WTC11 (cell line): ENCODE measurements at regions of chr13 and their contacts with region 1.

Region 1: DNA sequence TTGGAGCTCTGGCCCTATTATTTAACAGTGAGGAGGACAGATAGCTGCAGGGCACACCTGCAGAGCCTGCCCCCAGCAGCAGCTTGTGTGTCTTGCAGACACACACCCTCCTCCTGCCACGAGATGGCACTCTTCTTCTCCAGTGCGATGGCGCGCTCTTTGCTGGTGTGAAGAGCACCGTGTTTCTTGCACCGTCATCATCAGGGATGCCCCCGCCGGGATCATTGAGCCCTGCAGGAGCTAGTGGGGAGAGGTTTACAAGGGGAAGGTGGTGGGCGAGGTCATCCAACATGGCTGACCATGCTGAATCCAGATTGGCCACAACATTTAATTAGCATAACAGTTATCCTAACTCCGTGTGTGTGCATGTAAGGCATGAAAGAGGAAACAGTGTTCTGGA is 105.6 kb downstream of the RAB20 start:
- DNase-seq: peak; percentile 84
- ATAC-seq: peak; percentile 93
- H3K4me3 Mint-ChIP-seq: no peak overlapping the region
- H3K27ac Mint-ChIP-seq: peak overlapping the region; percentile 19; the same call in 1 of the 2 replicates
- H3K4me1 Mint-ChIP-seq: peaks cover 28% of the 10 kb centered on the region
- H3K27me3 Mint-ChIP-seq: no peaks in the 10 kb centered on the region
- CTCF ChIP-seq: peak; percentile 47; the same call in 1 of the 2 replicates

Region 2: GRCh38 chr13:110444226-110444653 is 11.7 kb before region 1 on chr13:
- CTCF ChIA-PET with region 1: interaction called, 16 read pairs
- POLR2A ChIA-PET with region 1: no interaction called
- DNase-seq: no peak
- ATAC-seq: no peak
- H3K4me3 Mint-ChIP-seq: no peak overlapping the region
- H3K27ac Mint-ChIP-seq: no peak overlapping the region
- H3K4me1 Mint-ChIP-seq: peaks cover 18% of the 10 kb centered on the region
- H3K27me3 Mint-ChIP-seq: no peaks in the 10 kb centered on the region
- CTCF ChIP-seq: no peak

Region 3: GRCh38 chr13:110509971-110510786 is 54.2 kb after region 1 on chr13:
- CTCF ChIA-PET with region 1: interaction called, 10 read pairs
- POLR2A ChIA-PET with region 1: no interaction called
- DNase-seq: no peak
- ATAC-seq: peak; percentile 17; the same call in 1 of the 2 replicates
- H3K4me3 Mint-ChIP-seq: no peak overlapping the region
- H3K27ac Mint-ChIP-seq: no peak overlapping the region; the same call in 1 of the 2 replicates
- H3K4me1 Mint-ChIP-seq: peaks cover 13% of the 10 kb centered on the region; the same call in 1 of the 2 replicates
- H3K27me3 Mint-ChIP-seq: no peaks in the 10 kb centered on the region
- CTCF ChIP-seq: no peak

Region 4: DNA sequence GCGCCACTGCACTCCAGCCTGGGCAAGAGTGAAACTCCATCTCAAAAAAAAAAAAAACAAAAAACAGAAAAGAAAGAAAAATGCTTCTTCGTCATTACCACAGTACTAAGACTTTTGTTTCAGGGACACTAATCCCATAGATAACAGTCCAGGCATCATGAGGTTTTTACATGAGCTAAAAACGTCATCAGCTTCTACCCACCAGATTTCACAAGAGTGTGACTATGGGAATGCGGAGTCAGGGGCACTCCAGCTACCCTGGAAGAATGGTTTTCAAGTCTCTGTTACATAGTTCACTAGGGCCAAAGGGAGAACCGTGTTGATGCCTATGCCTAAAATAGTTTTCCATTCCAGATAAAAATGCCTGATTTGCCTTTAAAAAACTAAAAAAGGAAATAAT is 72.4 kb after region 1 on chr13:
- CTCF ChIA-PET with region 1: interaction called, 23 read pairs
- POLR2A ChIA-PET with region 1: no interaction called
- DNase-seq: no peak
- ATAC-seq: no peak
- H3K4me3 Mint-ChIP-seq: no peak overlapping the region
- H3K27ac Mint-ChIP-seq: peak overlapping the region; percentile 91
- H3K4me1 Mint-ChIP-seq: peaks cover 53% of the 10 kb centered on the region
- H3K27me3 Mint-ChIP-seq: no peaks in the 10 kb centered on the region; the same call in 1 of the 2 replicates
- CTCF ChIP-seq: no peak

Region 5: DNA sequence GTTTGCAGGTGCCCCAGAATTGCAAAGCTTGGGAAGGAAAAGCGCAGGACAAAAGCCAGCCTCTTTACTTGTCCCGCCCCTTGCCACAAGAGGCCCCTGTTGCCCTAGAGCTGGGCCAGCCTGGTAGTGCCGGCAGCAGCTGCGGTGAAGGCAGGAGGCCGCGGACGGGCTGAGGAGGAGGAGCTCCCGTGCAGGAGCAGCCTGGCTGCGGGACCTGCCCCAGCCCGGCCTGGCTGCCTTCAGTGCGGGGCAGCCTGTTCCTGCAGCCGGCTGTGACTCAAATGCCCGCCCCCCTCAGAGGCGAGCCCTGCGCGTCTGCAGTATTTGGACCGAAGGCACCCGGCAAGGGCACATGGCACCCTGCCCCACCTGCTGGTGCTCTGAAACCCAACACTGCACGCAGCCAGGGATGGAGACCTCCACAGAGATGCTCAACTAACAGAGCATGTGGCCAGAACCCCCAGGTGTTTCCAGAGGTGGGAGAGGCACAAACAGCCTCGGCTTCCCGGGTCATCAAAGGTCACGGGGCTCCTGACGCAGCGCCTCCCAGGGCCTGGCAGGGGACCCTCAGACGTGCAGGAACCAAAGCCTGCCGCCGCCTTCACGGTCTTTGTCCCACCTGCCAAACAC is 189.1 kb after region 1 on chr13:
- CTCF ChIA-PET with region 1: interaction called, 25 read pairs
- POLR2A ChIA-PET with region 1: no interaction called
- DNase-seq: peak; percentile 89
- ATAC-seq: peak; percentile 97
- H3K4me3 Mint-ChIP-seq: no peak overlapping the region
- H3K27ac Mint-ChIP-seq: no peak overlapping the region
- H3K4me1 Mint-ChIP-seq: peaks cover 4% of the 10 kb centered on the region
- H3K27me3 Mint-ChIP-seq: no peaks in the 10 kb centered on the region
- CTCF ChIP-seq: 0 out of 2 replicates have a peak, but pooled peaks have one; percentile 24